ENCODE measurements at regions of chr21 and their contacts with region 1.

Region 1: DNA sequence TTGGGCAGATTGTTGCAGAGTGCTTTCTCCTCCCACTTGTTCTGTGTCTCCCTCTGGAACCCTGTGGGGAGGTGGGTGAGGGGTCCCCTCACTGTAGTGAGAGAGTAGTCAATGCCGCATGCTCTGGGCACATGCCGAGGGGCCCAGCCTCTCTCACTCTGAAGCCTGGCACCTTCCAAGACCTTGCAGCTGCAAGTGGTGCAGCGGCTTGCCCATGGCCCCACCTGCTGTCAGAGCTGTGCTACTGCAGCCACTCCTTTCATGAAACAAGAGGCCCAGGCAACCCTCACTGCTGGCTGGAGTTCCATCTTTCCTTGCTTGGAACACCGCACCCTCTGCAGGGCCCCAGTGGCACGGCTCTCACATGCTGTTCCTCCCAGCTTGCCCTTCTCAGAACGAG is 58.4 kb upstream of the COL6A1 start:
- DNase-seq: peak; percentile 56 to 84
- H3K4me3 ChIP-seq: no peak overlapping the region
- H3K27ac ChIP-seq: no peak overlapping the region
- H3K4me1 ChIP-seq: no peaks in the 10 kb centered on the region
- H3K27me3 ChIP-seq: peaks cover 0 to 4% (median 0%) of the 10 kb centered on the region in 4 experiments; a peak in 2 of 7 replicates
- CTCF ChIP-seq: peak; percentile 80 to 94 (median 93)
- EP300 ChIP-seq: no peak
- POLR2A ChIP-seq: no peak
- RAD21 ChIP-seq: peak; percentile 86 to 87

Region 2: GRCh38 chr21:45887120-45887611 is 36.0 kb before region 1 on chr21:
- CTCF ChIA-PET with region 1: interaction called, 26 read pairs
- POLR2A ChIA-PET with region 1: no interaction called
- DNase-seq: no peak
- H3K4me3 ChIP-seq: no peak overlapping the region
- H3K27ac ChIP-seq: no peak overlapping the region; the same call in 1 of the 2 replicates
- H3K4me1 ChIP-seq: no peaks in the 10 kb centered on the region
- H3K27me3 ChIP-seq: no peaks in the 10 kb centered on the region
- CTCF ChIP-seq: no peak
- EP300 ChIP-seq: no peak
- POLR2A ChIP-seq: no peak
- RAD21 ChIP-seq: no peak

Region 3: GRCh38 chr21:45910543-45911221 is 12.5 kb before region 1 on chr21:
- CTCF ChIA-PET with region 1: interaction called, 19 read pairs
- POLR2A ChIA-PET with region 1: no interaction called
- DNase-seq: no peak
- H3K4me3 ChIP-seq: no peak overlapping the region
- H3K27ac ChIP-seq: no peak overlapping the region
- H3K4me1 ChIP-seq: no peaks in the 10 kb centered on the region
- H3K27me3 ChIP-seq: no peaks in the 10 kb centered on the region
- CTCF ChIP-seq: no peak
- EP300 ChIP-seq: no peak
- POLR2A ChIP-seq: no peak
- RAD21 ChIP-seq: no peak

Region 4: GRCh38 chr21:46046471-46046870 is 123.3 kb after region 1 on chr21:
- CTCF ChIA-PET with region 1: no interaction called
- POLR2A ChIA-PET with region 1: no interaction called
- DNase-seq: no peak
- H3K4me3 ChIP-seq: no peak overlapping the region
- H3K27ac ChIP-seq: no peak overlapping the region
- H3K4me1 ChIP-seq: peaks cover 0 to 19% (median 5%) of the 10 kb centered on the region in 4 experiments; a peak in 6 of 7 replicates
- H3K27me3 ChIP-seq: 0 out of 7 replicates have a peak, but pooled peaks cover 0 to 2% (median 0%) of the 10 kb centered on the region in 4 experiments
- CTCF ChIP-seq: no peak
- EP300 ChIP-seq: no peak
- POLR2A ChIP-seq: no peak
- RAD21 ChIP-seq: no peak

Region 5: DNA sequence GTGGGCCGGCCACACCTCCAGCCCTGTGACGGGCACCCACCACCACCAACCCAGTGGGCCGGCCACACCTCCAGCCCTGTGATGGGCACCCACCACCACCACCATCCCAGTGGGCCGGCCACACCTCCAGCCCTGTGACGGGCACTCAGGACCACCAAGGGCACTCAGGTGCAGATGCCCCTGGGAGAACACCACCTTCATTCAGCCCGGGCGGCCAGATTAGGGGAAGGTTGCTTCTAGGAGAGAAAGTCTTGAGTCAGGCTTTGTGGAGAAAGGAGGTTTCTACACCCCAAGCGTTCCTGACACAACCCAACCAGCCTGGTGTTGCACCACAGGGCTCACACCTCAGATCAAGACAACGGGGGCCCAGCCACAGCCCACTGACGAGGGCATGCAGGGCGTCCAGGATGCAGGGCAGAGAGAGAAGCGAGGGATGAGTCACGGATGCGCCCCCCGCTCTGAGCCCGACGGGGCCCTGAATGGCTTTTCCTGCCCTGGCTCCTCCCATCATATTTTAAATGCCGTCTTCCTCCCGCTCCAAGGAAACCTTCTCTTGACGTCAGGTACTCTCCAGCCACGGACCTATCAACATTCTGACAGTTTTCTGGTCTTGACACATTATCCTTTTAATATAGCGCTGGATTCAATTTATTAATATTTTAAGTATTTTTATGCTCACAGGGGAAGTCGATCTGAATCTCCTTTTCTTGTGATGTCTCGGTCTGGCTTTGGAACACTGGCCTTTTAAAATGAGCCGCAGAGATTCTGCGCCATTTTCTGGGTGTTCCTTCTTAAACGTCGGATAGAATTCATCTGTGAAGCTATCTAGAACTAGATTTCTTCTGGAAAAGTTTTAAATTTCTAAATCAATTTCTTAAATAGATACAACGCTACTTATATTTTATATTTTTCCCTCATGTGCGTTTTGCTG is 261.7 kb after region 1 on chr21:
- CTCF ChIA-PET with region 1: no interaction called
- POLR2A ChIA-PET with region 1: no interaction called
- DNase-seq: peak; percentile 88 to 89
- H3K4me3 ChIP-seq: peak overlapping the region; percentile 32 to 93 (median 61)
- H3K27ac ChIP-seq: peak overlapping the region; percentile 43
- H3K4me1 ChIP-seq: peaks cover 7 to 20% (median 9%) of the 10 kb centered on the region in 4 experiments; a peak in 6 of 7 replicates
- H3K27me3 ChIP-seq: no peaks in the 10 kb centered on the region
- CTCF ChIP-seq: no peak
- EP300 ChIP-seq: no peak
- POLR2A ChIP-seq: 0 out of 3 replicates have a peak, but pooled peaks of 1 of the 2 experiments have one; percentile 48
- RAD21 ChIP-seq: no peak

Measured in H1 (cell line).